ENCODE measurements at regions of chrX and their contacts with region 1.

Region 1: DNA sequence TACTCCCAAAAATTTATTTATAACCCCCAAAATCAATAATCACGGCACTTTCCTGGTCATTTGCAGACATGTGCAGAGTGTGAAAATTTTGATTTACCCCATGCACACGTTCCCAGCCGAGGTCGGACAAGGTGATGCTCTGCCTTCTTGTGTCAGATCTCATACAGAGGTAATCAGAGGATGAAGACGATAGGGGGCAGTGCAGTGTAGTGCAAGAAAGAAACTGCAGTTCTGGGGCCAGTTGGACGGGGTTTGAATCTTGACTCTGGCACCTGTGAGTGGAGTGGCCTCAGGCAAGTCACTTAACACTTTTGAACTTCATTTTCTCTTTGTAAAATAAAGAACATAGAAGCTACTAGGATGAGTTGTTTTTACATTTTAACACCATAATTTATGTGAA is 88.4 kb downstream of the FRMPD3 start:
- DNase-seq: peak; percentile 27
- H3K4me3 ChIP-seq: no peak overlapping the region
- H3K27ac ChIP-seq: no peak overlapping the region
- H3K4me1 ChIP-seq: no peaks in the 10 kb centered on the region
- H3K27me3 ChIP-seq: peaks cover 2% of the 10 kb centered on the region
- CTCF ChIP-seq: peak; percentile 61 to 68

Region 2: GRCh38 chrX:106649523-106650428 is 888.0 kb before region 1 on chrX:
- CTCF ChIA-PET with region 1: no interaction called
- dilution Hi-C with region 1: no loop called
- in situ Hi-C with region 1: no loop called
- intact Hi-C with region 1: no loop called
- DNase-seq: no peak
- H3K4me3 ChIP-seq: no peak overlapping the region
- H3K27ac ChIP-seq: no peak overlapping the region
- H3K4me1 ChIP-seq: no peaks in the 10 kb centered on the region
- H3K27me3 ChIP-seq: no peaks in the 10 kb centered on the region
- CTCF ChIP-seq: no peak

Region 3: DNA sequence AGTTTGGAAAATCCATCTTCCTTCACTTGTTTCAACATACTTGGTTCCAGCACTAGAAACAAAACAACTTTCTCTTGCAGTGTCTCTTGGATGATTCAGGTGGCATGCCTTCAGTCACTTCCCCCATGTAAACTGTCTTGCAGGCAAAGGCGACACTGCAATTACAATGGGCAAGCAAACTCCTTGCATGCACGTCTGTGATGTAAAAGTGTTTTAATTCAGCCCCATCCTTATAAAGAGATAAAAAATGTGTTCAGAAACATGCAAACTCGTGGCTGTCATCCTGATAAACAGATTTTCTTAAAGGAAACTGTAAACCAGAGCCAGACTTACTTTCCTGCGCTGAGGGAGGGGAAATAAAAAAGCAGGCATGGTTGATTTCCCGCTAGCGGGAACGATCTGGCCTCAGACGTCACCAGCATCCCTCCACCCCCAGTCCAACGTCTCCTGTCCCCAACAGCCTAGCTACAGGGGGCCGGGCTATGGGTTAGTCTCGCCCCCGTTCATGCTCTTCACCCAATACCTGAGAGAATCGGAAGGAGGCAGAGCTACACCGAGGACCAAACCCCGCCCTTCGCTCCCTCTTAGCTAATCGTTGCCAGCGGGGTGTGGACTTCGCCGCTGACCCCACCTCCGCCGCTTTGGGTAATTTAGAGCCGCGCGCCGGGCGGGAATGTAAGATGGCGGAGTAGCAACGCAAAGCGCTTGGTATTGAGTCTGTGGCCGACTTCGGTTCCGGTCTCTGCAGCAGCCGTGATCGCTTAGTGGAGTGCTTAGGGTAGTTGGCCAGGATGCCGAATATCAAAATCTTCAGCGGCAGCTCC is 90.2 kb after region 1 on chrX and contains the start of gene PRPS1:
- CTCF ChIA-PET with region 1: interaction called, 3 read pairs
- dilution Hi-C with region 1: no loop called
- in situ Hi-C with region 1: no loop called
- intact Hi-C with region 1: loop called (anchors 2 kb)
- DNase-seq: peak; percentile 90
- H3K4me3 ChIP-seq: peak within 1 kb of the TSS; percentile 48 to 66 (median 66)
- H3K27ac ChIP-seq: peak within 1 kb of the TSS; percentile 56
- H3K4me1 ChIP-seq: no peaks in the 10 kb centered on the region
- H3K27me3 ChIP-seq: peaks cover 2% of the 10 kb centered on the region
- CTCF ChIP-seq: no peak
- total RNA-seq, gene PRPS1: 23.2 to 34.1 TPM

Region 4: GRCh38 chrX:107672955-107673378 is 135.2 kb after region 1 on chrX:
- CTCF ChIA-PET with region 1: no interaction called
- dilution Hi-C with region 1: no loop called
- in situ Hi-C with region 1: no loop called
- intact Hi-C with region 1: loop called (anchors 1 kb)
- DNase-seq: peak; percentile 66
- H3K4me3 ChIP-seq: no peak overlapping the region
- H3K27ac ChIP-seq: peak overlapping the region; percentile 98
- H3K4me1 ChIP-seq: peaks cover 25% of the 10 kb centered on the region
- H3K27me3 ChIP-seq: peaks cover 3% of the 10 kb centered on the region
- CTCF ChIP-seq: peak; percentile 65 to 76

Region 5: DNA sequence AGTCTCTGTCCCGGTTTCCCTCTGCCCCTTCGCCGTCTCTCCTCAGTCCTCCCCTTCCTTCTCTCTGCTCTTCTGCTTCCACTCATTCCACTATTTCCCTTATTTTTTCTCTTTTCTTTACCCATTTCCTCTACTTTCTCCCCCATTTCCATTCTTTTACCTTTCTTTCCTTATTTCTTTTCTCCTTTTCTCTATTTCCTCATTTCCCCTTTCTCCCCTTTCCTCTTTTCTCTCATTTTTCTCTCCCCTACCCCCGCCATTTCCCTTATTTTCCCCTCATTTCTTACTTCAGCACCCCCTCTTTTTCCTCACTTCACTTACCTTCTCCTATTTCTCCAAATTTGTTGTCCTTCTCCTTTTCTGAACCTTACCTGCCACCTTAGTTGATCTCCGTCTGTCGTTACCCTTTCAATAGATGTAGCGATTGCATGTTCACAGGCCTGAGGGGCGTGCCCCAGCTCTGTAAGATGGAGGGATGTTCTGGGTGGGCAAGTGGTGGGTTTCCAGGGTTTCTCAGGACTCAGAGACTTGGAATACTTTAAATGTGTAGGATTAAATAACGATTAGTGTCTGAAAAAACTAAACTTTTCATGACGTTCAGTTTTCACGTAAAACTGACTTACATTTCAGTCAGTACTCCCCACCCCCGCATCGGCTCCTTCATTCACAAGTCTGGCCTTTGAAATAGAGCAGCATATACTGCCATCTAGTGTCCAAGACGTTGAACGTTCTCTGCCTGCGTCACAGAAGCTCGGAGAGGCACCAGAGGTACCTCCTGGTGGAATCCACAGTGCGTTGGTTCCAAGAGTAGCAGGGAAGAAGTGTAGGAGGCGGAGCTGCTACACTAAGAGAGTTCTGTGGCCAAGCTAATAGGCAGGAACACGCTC is 239.1 kb after region 1 on chrX:
- CTCF ChIA-PET with region 1: no interaction called
- dilution Hi-C with region 1: no loop called
- in situ Hi-C with region 1: loop called (anchors 10 to 25 kb)
- intact Hi-C with region 1: loop called (anchors 1 kb)
- DNase-seq: peak; percentile 84
- H3K4me3 ChIP-seq: peak overlapping the region; percentile 47 to 60 (median 54)
- H3K27ac ChIP-seq: no peak overlapping the region
- H3K4me1 ChIP-seq: peaks cover 9% of the 10 kb centered on the region
- H3K27me3 ChIP-seq: no peaks in the 10 kb centered on the region
- CTCF ChIP-seq: peak; percentile 81 to 87

Region 6: GRCh38 chrX:107894038-107894437 is 356.2 kb after region 1 on chrX:
- CTCF ChIA-PET with region 1: interaction called, 4 read pairs
- dilution Hi-C with region 1: no loop called
- in situ Hi-C with region 1: no loop called
- intact Hi-C with region 1: loop called (anchors 1 kb)
- DNase-seq: peak; percentile 57
- H3K4me3 ChIP-seq: no peak overlapping the region
- H3K27ac ChIP-seq: no peak overlapping the region
- H3K4me1 ChIP-seq: no peaks in the 10 kb centered on the region
- H3K27me3 ChIP-seq: no peaks in the 10 kb centered on the region
- CTCF ChIP-seq: peak; percentile 46 to 53